Thyroid gland (tissue), 4 donors: ENCODE measurements at regions of chr12 and their contacts with region 1.

Region 1: DNA sequence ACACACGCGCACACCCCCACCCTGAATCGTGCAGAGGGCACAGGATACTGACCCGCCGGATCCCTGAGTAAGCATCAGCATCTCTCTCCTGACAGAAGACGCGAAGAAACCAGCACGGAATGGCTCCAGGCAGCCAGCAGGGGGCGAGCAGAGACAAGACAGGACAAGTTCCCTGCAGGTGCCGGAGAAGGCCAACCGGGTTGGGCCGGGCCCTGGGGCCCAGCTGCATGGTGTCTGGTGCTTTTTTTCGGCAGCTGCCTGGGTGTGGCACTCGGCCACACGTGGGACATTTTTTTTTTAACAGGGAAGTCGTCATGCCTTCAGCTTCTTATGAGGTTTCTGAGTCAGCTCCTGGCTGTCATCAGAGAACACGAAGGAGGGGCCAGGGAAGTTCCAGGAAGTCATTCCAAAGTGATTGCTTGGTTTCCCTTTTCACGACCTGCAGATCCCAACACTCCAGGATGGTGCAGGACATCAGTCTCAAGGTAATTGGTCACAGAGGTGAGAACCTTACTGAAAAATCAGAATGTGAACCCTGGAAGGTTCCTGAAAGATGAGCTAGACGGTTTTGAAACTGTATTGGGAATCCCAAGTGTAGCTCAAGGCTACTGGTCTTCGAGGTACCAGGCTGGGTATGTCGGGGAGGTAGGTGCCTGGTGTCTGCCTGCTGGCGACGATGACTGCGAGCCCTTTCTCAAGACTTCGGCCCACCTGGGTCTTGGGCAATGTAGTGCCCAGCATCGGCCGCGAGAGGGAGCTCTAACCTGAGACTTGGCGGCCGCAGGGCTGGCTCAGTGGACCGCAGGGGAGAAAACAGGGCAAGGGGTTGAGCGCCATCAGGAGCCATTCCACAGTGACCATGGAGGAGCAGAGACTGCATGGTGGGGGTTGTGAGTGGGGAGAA is 190.8 kb upstream of the PRMT8 start:
- DNase-seq: peak; percentile 89 to 93
- H3K4me3 ChIP-seq: no peak overlapping the region
- H3K27ac ChIP-seq: peak overlapping the region in 1 of 3 donors; percentile 65
- H3K4me1 ChIP-seq: peaks cover 7 to 20% of the 10 kb centered on the region in 2 donors
- H3K27me3 ChIP-seq: no peaks in the 10 kb centered on the region
- CTCF ChIP-seq: peak; percentile 89 to 95 (median 93)
- POLR2A ChIP-seq: no peak

Region 2: DNA sequence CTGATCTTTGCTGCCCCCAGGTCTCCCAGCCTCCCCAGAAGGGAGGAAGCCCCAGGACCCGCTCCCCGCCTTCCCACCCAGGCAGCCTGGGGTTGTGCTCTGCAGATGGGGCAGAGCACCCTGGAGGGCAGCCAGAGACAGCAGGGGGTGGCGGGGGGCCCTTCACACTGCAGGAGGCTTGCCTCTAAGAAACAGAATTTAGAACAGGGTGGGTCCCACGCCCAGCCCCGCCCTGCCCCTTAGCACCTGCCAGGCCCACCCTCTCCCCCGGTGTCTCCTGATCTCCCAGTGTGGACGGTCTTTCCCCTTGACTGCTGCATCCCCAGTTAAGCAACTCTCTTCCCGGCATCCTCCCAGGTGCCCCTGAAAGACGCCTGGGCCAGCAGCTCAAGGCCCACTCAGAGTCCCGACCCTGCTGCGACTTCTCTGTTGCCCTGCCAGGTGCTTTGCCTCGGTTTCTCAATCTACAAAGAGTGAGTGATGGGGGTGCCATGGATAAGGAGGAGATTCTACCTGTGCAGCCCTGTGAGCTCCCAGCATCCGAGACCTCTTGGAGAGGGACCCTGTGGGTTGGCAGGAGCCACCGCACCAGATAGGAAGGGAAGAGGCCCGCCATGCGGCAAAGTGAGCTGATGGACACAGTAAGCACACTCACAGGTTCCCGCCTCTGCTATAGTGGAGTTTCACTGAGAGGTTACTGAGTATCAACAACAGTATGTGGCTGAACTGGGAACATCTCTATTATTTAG is 832.6 kb before region 1 on chr12:
- intact Hi-C with region 1: no loop called
- DNase-seq: no peak
- H3K4me3 ChIP-seq: no peak overlapping the region
- H3K27ac ChIP-seq: no peak overlapping the region
- H3K4me1 ChIP-seq: no peaks in the 10 kb centered on the region
- H3K27me3 ChIP-seq: no peaks in the 10 kb centered on the region
- CTCF ChIP-seq: no peak
- POLR2A ChIP-seq: no peak

Region 3: GRCh38 chr12:3496957-3497356 is 196.8 kb after region 1 on chr12:
- intact Hi-C with region 1: no loop called
- DNase-seq: peak in 1 of 2 donors; percentile 13
- H3K4me3 ChIP-seq: no peak overlapping the region
- H3K27ac ChIP-seq: no peak overlapping the region
- H3K4me1 ChIP-seq: peaks cover 0 to 17% of the 10 kb centered on the region in 2 donors
- H3K27me3 ChIP-seq: peaks cover 23% of the 10 kb centered on the region
- CTCF ChIP-seq: no peak
- POLR2A ChIP-seq: no peak

Region 4: DNA sequence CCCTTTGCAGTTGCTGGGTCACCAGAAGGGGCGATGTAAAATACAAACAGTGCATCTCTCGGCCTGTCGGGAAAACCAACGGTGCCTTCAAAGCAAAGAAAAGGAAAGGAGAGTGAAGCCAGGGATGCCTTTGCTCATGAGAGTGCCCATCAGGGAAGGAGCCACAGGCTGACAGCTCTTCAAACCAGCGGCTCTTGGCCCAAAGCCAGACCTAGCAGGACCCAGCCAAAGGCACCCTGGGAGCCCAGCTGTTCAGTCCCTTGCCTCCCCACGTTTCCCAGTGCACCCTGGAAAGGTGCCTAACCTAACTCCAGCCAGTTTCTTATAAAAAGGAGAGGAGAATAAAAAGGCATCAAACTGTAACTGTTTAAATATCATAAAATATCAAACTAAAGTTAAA is 220.0 kb after region 1 on chr12:
- intact Hi-C with region 1: no loop called
- DNase-seq: peak; percentile 68 to 69
- H3K4me3 ChIP-seq: no peak overlapping the region
- H3K27ac ChIP-seq: no peak overlapping the region
- H3K4me1 ChIP-seq: no peaks in the 10 kb centered on the region
- H3K27me3 ChIP-seq: no peaks in the 10 kb centered on the region
- CTCF ChIP-seq: no peak
- POLR2A ChIP-seq: no peak

Region 5: DNA sequence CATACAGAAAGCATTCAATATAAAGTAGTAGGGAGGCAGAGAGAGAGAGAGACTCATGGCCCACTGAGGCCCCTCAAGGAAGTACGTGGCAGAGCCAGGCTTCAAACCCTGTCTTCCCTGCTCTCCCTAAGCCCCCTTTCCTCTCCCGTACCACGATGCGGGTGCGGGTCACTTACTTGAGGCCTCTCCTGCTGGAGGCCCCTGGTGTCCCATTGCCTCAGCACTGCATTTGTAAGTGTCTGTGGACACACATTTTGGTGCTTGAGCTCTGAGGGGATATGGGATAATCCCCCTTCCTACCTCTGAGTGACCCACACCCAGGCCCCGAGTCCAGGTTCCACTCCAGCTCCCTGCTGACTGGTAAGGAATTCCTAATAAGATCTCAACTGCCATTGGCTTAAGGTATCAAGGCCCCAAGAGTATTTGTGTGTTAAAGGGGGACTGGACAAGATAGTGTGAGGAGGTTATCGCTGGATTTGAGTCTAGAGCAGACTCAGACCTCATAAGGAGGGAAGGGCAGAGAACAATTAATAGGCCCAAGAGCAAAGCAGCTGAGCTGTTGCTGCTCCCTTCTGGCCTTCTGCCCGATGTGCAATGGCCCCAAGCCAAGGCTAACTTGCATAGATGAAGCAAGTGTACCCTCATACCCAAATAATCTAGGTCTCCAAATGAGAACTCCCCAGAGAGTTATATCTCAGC is 380.9 kb after region 1 on chr12:
- intact Hi-C with region 1: loop called (anchors 5 kb)
- DNase-seq: peak; percentile 71 to 78
- H3K4me3 ChIP-seq: no peak overlapping the region
- H3K27ac ChIP-seq: no peak overlapping the region
- H3K4me1 ChIP-seq: no peaks in the 10 kb centered on the region
- H3K27me3 ChIP-seq: no peaks in the 10 kb centered on the region
- CTCF ChIP-seq: peak in 4 of 6 experiments; percentile 18 to 51 (median 38)
- POLR2A ChIP-seq: no peak

Region 6: DNA sequence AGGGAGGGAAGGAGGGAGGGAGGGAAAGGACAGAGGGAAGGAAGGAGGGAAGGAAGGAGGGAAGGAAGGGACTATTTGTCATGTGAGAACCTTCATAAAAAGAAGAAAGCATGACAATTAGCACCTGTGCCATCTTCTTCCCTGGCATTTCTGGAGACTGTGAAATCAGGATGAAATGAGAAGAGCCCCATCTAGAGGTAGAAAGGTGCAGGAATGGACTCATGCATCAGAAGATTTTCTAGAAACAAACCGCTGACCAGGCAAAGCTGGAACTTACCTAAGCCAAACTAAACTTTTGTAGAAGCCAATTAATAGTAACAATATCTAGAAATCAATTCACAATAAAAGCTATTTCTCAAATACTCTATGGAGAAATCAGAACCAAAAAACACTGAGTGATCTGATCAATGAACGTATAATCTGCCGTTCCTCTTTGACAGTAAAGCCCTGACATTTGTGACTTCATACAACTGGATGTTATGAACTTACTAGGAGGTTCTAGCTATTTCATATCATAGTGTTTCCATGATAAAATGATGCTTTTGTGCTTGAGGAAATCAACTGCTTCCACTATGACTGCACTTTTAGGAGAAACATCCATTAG is 477.1 kb after region 1 on chr12:
- intact Hi-C with region 1: loop called (anchors 5 kb)
- DNase-seq: peak in 1 of 2 donors; percentile 4
- H3K4me3 ChIP-seq: no peak overlapping the region
- H3K27ac ChIP-seq: no peak overlapping the region
- H3K4me1 ChIP-seq: no peaks in the 10 kb centered on the region
- H3K27me3 ChIP-seq: no peaks in the 10 kb centered on the region
- CTCF ChIP-seq: peak; percentile 42 to 78 (median 62)
- POLR2A ChIP-seq: no peak

Region 7: GRCh38 chr12:3803865-3804472 is 503.8 kb after region 1 on chr12:
- intact Hi-C with region 1: loop called (anchors 5 kb)
- DNase-seq: peak; percentile 72
- H3K4me3 ChIP-seq: no peak overlapping the region
- H3K27ac ChIP-seq: no peak overlapping the region
- H3K4me1 ChIP-seq: no peaks in the 10 kb centered on the region
- H3K27me3 ChIP-seq: no peaks in the 10 kb centered on the region
- CTCF ChIP-seq: peak; percentile 44 to 90 (median 64)
- POLR2A ChIP-seq: no peak